Activated CD4-positive, alpha-beta T cell treated with anti-CD3 and anti-CD28 coated beads for 36 hours (primary cell): ENCODE measurements at regions of chr19 and their contacts with region 1.

Region 1: DNA sequence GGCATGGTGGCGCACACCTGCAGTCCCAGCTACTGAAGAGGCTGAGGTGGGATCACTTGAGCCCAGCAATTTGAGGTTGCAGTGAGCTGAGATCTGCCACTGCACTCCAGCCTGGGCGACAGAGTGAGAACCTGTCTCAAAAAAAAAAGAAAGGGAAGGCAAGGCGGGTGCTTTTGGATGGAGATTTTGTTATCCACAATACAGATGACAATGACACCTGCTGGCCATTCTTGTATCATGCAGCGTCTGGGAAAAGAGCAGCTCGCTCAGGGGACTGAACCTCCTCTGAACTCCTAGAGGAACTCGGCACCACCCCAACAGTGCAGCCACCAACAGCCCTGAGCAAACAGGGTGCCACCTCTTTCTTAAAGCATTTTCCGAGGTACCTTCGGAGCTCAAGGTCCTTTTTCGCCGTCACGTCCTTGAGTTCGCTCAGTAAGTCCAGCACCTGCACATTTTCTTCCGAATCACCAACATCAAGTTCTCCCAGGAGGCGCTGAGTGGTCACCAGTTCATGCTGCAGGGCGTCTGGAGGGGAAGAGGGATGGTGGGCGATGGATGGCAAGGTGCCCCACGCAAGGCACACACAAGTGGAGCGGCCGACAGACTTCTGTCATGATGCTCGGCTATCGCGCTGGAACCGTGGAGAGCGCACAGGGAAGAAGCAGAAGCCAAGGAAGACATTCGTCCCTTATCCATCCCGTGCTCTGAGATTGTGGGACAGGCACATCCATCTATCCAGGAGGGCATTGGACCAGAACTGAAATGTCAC is 22.6 kb downstream of the HAUS8 start:
- DNase-seq: peak; percentile 37
- ATAC-seq: peak; percentile 30
- H3K4me3 Mint-ChIP-seq: no peak overlapping the region
- H3K27ac Mint-ChIP-seq: no peak overlapping the region
- H3K4me1 Mint-ChIP-seq: no peaks in the 10 kb centered on the region
- H3K27me3 Mint-ChIP-seq: no peaks in the 10 kb centered on the region

Region 2: GRCh38 chr19:16714702-16715287 is 337.8 kb before region 1 on chr19:
- CTCF ChIA-PET with region 1: no interaction called
- POLR2A ChIA-PET with region 1: no interaction called
- intact Hi-C with region 1: loop called in 1 of 2 experiments (anchors 2 kb)
- DNase-seq: peak; percentile 75
- ATAC-seq: peak; percentile 47
- H3K4me3 Mint-ChIP-seq: no peak overlapping the region
- H3K27ac Mint-ChIP-seq: no peak overlapping the region
- H3K4me1 Mint-ChIP-seq: no peaks in the 10 kb centered on the region
- H3K27me3 Mint-ChIP-seq: peaks cover 2% of the 10 kb centered on the region

Region 3: GRCh38 chr19:16771618-16772017 is 281.0 kb before region 1 on chr19:
- CTCF ChIA-PET with region 1: interaction called, 3 read pairs
- POLR2A ChIA-PET with region 1: no interaction called
- intact Hi-C with region 1: loop called (anchors 1 to 5 kb)
- DNase-seq: peak; percentile 86
- ATAC-seq: peak; percentile 77
- H3K4me3 Mint-ChIP-seq: no peak overlapping the region
- H3K27ac Mint-ChIP-seq: no peak overlapping the region
- H3K4me1 Mint-ChIP-seq: no peaks in the 10 kb centered on the region
- H3K27me3 Mint-ChIP-seq: peaks cover 35% of the 10 kb centered on the region